ENCODE measurements at regions of chr2 and their contacts with region 1.

Region 1: GRCh38 chr2:165401285-165401852 is 68.1 kb upstream of the CSRNP3 start:
- DNase-seq: no peak

Region 2: DNA sequence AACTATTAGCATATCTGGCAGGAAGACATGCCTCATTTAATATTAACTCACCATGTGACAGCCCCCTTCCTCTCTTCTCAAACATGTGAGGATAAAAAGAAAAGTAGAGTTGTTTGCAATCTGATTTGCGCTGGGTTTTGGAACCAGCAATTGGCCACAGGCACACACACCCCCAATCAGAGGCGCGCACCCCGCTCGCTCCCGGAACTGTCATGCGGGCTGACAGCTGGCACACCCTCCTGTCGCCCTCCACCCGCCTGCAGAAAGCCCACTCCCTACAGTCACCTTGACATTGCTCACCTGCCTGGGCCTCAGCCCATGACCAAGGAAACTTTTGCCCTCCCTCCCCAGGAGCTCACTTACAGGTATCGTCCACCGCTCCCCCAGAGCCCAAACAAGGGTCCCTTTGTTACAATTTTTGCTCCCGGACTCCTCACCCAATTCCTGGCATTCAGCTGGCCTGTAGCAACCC is 560.9 kb before region 1 on chr2:
- intact Hi-C with region 1: no loop called
- DNase-seq: peak; percentile 90

Region 3: GRCh38 chr2:165698444-165698894 is 297.1 kb after region 1 on chr2:
- intact Hi-C with region 1: loop called (anchors 5 to 10 kb)
- DNase-seq: no peak

Region 4: DNA sequence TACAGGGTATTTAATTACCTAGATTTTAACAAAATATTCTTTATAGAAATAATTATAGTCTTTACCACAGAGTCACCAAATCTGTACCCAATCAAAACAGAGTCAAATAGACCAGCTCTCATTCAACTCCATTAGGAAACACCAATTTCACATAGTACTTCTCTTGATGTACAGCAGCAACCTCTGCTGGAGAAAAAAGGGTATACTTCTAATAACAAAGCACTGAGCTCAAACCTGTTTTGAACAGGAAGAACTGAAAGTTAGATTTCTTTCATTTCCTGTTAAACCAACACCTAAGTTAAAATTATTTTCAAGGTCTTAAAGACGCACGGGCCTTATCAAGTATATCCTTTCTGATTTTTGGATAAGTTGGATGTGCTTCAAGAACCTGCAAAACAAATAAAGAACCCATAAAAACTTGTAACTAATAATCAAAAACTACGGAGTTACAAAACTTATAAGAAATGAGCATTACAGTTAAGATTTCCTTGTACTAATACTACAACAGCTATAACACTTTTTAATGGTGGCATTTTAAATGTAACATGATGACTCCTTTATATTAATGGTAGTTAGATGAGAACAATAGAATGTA is 473.2 kb after region 1 on chr2:
- intact Hi-C with region 1: loop called (anchors 5 to 10 kb)
- DNase-seq: no peak

Measured in posterior vena cava (tissue), 2 donors.